ENCODE measurements at regions of chr5 and their contacts with region 1.

Region 1: DNA sequence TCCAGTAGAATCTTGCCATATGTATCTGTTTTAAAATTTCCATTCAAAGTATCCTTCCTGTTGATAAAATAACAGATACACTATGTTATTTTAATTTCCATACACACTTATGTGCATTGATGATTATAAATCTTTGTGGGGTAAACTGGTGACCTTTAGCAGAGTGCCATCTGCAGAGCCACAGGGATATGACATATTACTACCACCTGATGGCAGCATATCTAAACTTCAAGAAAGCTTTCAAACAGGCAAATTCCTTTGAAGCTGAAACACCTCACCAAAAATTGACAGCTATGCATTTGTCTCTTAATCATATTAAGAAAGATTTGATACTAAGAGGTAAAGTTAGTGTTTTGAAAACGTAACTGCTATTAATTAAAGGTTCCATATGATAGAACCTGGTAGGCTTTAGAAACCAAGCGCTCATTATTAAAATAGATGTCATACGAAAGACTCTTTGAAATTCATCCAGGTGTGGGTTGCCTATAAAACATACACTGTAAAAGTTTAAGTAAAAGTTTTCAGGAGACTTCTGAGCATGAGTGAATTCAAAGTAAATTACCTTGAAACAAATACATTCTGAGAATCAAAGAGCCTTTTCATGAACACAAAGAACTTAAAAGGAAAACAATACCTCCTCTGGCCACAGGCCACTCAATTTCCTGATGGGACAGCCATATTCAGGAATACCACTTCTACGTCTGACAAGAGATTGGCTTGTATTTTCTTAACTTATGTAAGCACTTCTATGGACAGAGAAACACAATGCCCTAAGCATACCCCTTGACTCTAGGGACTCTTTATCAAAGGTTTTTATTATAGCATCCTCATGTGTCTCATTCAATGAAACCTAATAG is 93.3 kb downstream of the KIAA0825 start:
- DNase-seq: peak; percentile 30

Region 2: GRCh38 chr5:94481059-94481458 is 44.0 kb before region 1 on chr5:
- CTCF ChIA-PET with region 1: no interaction called
- POLR2A ChIA-PET with region 1: no interaction called
- DNase-seq: no peak

Region 3: DNA sequence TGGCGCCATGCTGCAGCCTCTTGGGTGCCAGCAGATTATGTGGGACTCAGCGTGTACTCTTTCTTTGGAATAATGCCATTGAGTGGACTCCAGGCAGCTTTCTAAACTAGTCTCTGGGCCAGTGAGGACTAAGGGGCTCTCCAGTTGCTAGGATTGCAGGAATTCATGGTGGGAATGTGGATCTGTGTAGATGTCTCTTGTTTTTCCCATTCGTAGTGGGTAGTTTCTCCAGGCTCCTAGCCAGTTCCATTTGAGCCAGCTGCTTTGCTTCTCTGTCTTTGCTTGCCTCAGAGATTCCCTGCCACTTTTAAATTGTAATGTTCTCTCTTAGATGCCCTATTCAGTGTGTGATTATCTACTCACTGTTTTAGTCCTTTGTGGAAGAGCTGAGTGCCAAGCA is 136.0 kb after region 1 on chr5:
- CTCF ChIA-PET with region 1: no interaction called
- POLR2A ChIA-PET with region 1: no interaction called
- DNase-seq: no peak

Region 4: DNA sequence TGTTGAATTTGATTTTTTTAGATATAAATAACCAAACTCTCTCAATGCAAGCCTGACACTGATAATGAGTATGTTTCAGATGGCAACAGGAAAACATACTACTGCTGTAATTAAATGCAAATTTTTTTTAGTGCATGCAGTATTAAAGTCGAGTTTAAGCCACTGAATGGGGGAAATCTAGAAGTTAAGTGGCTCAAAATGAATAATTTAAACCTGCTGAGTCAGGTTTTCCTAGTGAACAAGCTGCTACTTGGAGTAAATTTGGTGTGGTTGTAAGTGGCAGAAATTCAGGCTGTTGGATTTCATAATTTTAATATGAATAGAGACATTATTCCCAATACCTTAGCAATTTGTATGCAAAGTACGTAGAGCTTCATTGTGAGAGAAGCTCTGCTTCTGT is 215.2 kb after region 1 on chr5:
- CTCF ChIA-PET with region 1: interaction called, 13 read pairs
- POLR2A ChIA-PET with region 1: no interaction called
- DNase-seq: no peak